BJ (cell line): ENCODE measurements at regions of chr13 and their contacts with region 1.

Region 1: DNA sequence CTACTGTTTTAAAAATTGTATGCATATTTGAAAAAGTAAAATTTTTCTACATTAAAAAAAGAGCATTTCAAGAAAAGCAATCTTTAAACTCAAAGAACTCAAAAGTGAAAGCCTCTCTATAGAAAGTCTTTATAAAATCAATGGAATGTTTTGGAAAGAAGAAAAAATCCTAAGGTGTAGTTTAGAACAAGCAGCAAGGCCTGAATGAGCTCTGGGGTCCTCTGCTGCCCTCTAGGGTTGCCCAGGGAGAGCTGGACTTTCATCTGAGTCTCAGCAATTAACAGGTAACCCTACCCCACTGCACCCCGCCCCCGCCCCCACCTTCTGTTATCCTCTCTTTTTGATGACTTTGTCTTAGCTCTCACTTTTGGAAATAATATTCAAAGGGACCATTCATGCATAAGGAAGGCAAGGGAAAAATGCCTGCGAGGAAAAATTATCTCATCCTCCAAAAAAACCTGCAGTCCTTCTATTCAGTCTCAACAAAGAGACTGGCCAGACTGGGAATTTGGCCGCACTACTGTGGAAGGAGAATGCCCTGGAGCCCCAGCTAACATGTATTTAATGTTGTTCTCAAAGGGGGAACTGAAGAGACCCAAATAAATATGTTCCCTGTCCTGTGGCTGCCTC is 24.1 kb downstream of the SLC25A30 start:
- DNase-seq: no peak
- H3K4me3 ChIP-seq: no peak overlapping the region
- H3K27me3 ChIP-seq: no peaks in the 10 kb centered on the region
- CTCF ChIP-seq: peak; percentile 83

Region 2: DNA sequence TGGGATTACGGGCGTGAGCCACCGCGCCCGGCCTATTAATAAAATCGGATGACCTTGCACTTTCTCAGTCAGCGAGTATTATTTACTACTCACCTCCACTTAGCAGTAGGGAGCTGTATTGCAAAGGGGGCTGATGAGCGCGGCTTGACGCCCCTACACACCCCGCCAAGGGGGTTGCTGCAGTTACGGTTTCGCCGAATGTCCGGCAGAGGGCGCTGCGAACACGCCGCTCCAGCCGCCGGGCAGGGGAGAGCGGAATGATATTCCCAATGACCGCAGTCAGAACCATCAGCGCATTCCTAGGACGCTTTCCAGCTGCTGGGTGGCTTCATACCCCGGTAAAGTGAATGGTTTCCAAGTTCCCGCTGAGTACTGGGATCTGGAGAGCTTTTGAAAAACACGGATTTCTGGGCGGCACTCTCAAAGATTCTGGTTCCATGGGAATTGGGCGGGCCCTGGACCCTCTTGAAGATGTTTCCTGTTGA is 23.1 kb before region 1 on chr13:
- CTCF ChIA-PET with region 1: interaction called, 45 read pairs
- POLR2A ChIA-PET with region 1: no interaction called
- DNase-seq: no peak
- H3K4me3 ChIP-seq: no peak overlapping the region
- H3K27me3 ChIP-seq: no peaks in the 10 kb centered on the region
- CTCF ChIP-seq: peak; percentile 95

Region 3: DNA sequence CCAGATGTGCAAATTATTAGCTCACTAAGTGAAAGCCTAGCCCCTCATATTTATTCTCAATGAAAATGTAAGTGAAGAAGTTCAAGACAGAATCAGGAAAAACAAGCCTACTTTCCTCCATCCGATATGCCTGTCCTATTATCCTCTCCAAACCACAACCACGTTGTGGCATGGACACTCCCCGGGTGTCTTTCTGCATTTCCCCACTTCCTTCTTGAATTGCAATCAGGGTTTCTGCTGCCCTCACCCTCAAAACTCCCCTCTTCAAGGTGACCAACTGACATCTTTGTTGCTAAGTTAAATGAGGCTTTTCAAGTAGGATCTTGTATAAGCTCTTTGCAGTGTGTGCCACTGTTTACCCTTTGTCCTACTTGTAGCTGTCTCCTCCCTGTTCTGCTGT is 12.4 kb after region 1 on chr13:
- CTCF ChIA-PET with region 1: interaction called, 24 read pairs
- POLR2A ChIA-PET with region 1: no interaction called
- DNase-seq: no peak
- H3K4me3 ChIP-seq: no peak overlapping the region
- H3K27me3 ChIP-seq: no peaks in the 10 kb centered on the region
- CTCF ChIP-seq: no peak

Region 4: GRCh38 chr13:45575146-45575829 is 181.2 kb after region 1 on chr13:
- CTCF ChIA-PET with region 1: no interaction called
- POLR2A ChIA-PET with region 1: no interaction called
- DNase-seq: no peak
- H3K4me3 ChIP-seq: no peak overlapping the region
- H3K27me3 ChIP-seq: peaks cover 6% of the 10 kb centered on the region
- CTCF ChIP-seq: no peak